Ovary (tissue), 10 donors: ENCODE measurements at regions of chr6 and their contacts with region 1.

Region 1: DNA sequence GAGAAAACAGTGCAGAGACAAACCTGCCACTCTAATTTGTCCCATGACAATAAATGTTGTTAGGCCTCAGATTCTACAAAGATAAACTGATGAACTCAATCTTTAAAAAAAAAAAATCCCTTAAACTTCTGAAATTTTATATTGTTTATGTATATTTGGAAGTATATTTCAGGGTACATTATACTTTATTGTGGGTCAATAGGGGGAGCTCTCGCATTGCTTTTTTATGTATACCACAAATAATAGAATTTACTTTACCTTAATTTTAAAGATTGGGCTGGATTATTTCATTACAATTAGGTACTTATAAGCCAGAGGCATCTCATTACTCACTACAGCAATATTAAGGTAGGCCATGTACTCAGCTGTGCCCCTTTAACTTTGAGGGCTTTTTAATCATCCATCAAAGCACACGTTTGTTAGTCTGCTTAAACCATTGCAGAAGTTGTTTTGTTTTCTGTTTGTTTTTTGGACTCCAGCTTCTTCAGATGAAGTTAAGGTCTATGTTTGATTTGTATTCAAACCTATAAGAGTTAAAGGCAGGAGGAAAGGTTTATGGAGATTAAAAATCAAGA is 56.3 kb upstream of the EYA4 start:
- DNase-seq: no peak
- H3K4me3 ChIP-seq: no peak overlapping the region
- H3K27ac ChIP-seq: no peak overlapping the region
- H3K4me1 ChIP-seq: no peaks in the 10 kb centered on the region
- H3K27me3 ChIP-seq: no peaks in the 10 kb centered on the region
- CTCF ChIP-seq: no peak
- EP300 ChIP-seq: no peak
- POLR2A ChIP-seq: no peak

Region 2: DNA sequence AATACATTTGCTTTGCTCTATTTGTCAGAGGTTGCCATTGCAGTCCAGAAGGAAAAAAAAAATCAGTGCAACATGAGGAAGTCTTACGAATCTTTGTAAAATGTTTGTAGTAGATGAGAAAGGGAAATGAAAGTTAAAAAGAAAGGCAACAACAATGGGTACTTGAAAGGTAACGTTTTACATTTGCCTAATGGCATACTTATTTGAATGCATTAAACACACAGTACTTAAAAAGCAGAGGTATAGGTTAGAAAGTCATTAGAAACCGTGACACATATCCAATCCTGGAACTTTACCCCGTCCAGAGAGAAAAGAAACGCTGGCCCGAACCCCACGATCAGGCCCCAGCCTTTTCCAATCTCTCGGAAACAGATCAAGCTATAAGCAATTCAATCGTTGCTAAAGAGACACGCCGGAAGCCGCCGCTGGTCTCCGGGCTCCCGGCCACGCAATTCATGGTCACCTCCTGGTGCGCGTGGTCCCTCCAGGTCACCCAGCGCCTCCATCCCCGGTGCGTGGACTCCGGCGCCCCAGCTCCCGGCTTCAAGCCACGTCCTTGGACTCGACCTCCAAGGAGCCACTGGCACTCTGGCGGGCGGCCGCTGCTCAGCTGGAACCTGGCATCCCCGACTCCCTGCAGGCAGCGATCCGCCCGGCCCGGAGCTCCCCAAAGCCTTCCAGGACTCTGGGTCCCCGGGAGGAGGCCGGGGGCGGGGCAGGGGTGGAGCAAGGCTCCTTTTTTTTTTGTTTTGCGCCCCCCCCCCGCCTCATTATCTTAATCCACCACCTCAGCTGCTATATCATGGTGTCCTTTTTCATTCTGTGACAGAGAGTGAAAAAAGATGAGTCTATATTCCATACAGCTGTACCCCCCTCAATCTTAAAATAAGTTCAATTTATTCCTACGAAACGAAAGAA is 386.7 kb before region 1 on chr6 and contains the start of gene SLC18B1:
- intact Hi-C with region 1: no loop called
- DNase-seq: peak; percentile 40 to 71 (median 61)
- H3K4me3 ChIP-seq: peak within 1 kb of the TSS; percentile 48
- H3K27ac ChIP-seq: peak within 1 kb of the TSS; percentile 37 to 61
- H3K4me1 ChIP-seq: no peaks in the 10 kb centered on the region
- H3K27me3 ChIP-seq: no peaks in the 10 kb centered on the region
- CTCF ChIP-seq: no peak
- EP300 ChIP-seq: no peak
- POLR2A ChIP-seq: no peak
- total RNA-seq, gene SLC18B1: 3.2 to 10.9 (median 9.7) TPM

Region 3: GRCh38 chr6:133136177-133136880 is 48.6 kb before region 1 on chr6:
- intact Hi-C with region 1: no loop called
- DNase-seq: no peak
- H3K4me3 ChIP-seq: no peak overlapping the region
- H3K27ac ChIP-seq: no peak overlapping the region
- H3K4me1 ChIP-seq: no peaks in the 10 kb centered on the region
- H3K27me3 ChIP-seq: no peaks in the 10 kb centered on the region
- CTCF ChIP-seq: no peak
- EP300 ChIP-seq: no peak
- POLR2A ChIP-seq: no peak

Region 4: DNA sequence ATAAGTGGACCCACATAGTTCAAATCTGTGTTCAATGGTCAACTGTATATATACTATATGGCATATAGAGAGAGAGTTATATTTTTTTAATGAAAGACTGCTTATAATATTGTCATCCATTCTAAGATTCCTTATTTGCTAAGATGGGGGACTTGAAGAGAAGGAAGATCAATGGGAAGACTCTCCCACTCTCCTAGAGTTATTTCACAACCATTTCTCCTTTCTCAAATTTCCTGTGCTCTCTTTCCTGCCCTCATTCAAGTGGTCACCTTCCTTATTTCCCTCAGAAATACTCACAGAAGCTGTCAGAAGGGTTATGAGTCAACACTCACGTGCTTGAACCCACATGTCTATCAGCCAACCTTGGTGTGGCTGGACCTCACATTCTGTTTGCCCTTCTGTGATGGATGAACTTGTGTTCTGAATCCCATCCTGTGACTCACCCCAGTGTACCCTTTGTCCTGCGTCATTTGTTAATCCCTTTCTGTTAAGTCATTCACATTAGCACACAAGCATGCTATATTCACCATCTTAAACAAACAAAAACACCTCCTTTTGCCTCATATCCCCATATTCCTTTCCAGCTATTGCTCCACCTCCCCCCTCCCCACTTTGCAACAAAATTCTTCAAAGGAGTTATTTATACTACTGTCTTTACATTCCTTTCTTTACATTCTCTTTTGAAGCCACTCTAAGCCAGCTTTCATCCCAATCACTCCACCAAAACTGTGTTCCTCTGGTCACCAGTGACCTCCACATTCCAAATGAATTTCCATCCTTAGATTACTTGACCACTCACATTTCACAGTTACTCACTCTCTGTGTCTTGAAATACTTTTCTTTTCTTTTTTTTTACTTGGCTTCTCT is 424.8 kb after region 1 on chr6:
- intact Hi-C with region 1: no loop called
- DNase-seq: no peak
- H3K4me3 ChIP-seq: no peak overlapping the region
- H3K27ac ChIP-seq: no peak overlapping the region
- H3K4me1 ChIP-seq: no peaks in the 10 kb centered on the region
- H3K27me3 ChIP-seq: no peaks in the 10 kb centered on the region
- CTCF ChIP-seq: no peak
- EP300 ChIP-seq: no peak
- POLR2A ChIP-seq: no peak

Region 5: GRCh38 chr6:133939778-133940667 is 755.1 kb after region 1 on chr6:
- intact Hi-C with region 1: loop called in 1 of 4 experiments (anchors 10 kb)
- DNase-seq: no peak
- H3K4me3 ChIP-seq: no peak overlapping the region
- H3K27ac ChIP-seq: no peak overlapping the region
- H3K4me1 ChIP-seq: no peaks in the 10 kb centered on the region
- H3K27me3 ChIP-seq: no peaks in the 10 kb centered on the region
- CTCF ChIP-seq: no peak
- EP300 ChIP-seq: no peak
- POLR2A ChIP-seq: no peak